Naive thymus-derived CD8-positive, alpha-beta T cell (primary cell): ENCODE measurements at regions of chr17 and their contacts with region 1.

Region 1: DNA sequence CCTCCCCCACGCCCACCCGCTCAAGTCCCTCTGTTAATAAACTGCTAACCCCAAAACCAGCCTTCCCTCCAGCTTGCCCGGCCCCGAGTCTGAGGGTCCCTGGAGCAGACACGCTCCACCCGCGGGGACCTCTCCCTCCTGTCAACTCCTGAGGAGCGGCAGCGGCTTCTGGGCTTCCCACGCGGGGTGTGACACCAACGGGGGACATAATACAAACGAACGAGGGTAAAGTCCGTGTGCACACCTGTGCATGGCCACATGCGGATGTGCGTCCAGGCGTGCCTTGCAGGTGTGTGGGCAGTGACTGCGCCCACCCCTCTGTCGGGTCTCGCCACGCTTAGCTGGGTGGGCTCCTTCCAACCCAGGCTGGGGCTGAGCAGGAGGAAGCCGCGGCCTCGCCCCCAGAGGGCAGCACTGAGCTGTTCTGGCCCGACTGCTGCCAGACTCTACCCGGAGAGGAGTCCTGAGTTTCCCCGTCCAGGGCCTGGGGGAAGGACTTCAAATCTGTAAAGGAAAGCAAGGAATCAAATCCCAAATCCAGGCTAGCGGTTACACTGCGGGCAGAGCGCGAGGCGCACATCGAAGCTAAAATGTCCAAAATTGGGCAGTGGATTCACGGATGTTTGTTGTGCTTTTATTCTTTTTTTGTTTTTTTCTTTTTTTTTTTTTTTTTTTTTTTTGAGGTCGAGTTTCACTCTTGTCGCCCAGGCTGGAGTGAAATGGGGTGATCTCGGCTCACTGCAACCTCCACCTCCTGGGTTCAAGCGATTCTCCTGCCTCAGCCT is 24.2 kb upstream of the KRT17 start:
- DNase-seq: peak; percentile 67 to 91 (median 83)
- ATAC-seq: peak; percentile 90 to 93
- H3K4me3 Mint-ChIP-seq: peak overlapping the region; percentile 63 to 92 (median 82)
- H3K27ac Mint-ChIP-seq: peak overlapping the region in 7 of 10 donors; percentile 41 to 93 (median 88)
- H3K4me1 Mint-ChIP-seq: peaks cover 9 to 10% (median 10%) of the 10 kb centered on the region in 4 donors
- H3K27me3 Mint-ChIP-seq: peaks cover 0 to 3% (median 0%) of the 10 kb centered on the region in 5 donors

Region 2: GRCh38 chr17:41548844-41549595 is 99.6 kb before region 1 on chr17:
- POLR2A ChIA-PET with region 1: interaction called, 13 read pairs
- DNase-seq: peak; percentile 70 to 89 (median 79)
- ATAC-seq: peak; percentile 89 to 91
- H3K4me3 Mint-ChIP-seq: peak overlapping the region; percentile 52 to 80 (median 66)
- H3K27ac Mint-ChIP-seq: peak overlapping the region in 7 of 10 donors; percentile 24 to 71 (median 63)
- H3K4me1 Mint-ChIP-seq: peaks cover 7 to 19% (median 17%) of the 10 kb centered on the region in 4 donors
- H3K27me3 Mint-ChIP-seq: peaks cover 2 to 26% (median 7%) of the 10 kb centered on the region in 5 donors